ENCODE measurements at regions of chr13 and their contacts with region 1.

Region 1: GRCh38 chr13:70297189-70297616 is 189.0 kb upstream of the KLHL1 start:
- DNase-seq: no peak
- ATAC-seq: no peak
- H3K4me3 ChIP-seq: no peak overlapping the region
- H3K27ac ChIP-seq: no peak overlapping the region
- H3K4me1 ChIP-seq: no peaks in the 10 kb centered on the region
- H3K27me3 ChIP-seq: no peaks in the 10 kb centered on the region
- CTCF ChIP-seq: no peak
- POLR2A ChIP-seq: no peak
- RAD21 ChIP-seq: no peak

Region 2: GRCh38 chr13:70310396-70311119 is 13.4 kb after region 1 on chr13:
- CTCF ChIA-PET with region 1: no interaction called
- POLR2A ChIA-PET with region 1: no interaction called
- dilution Hi-C with region 1: no loop called
- in situ Hi-C with region 1: no loop called
- intact Hi-C with region 1: loop called (anchors 1 kb)
- DNase-seq: no peak
- ATAC-seq: no peak
- H3K4me3 ChIP-seq: no peak overlapping the region
- H3K27ac ChIP-seq: no peak overlapping the region
- H3K4me1 ChIP-seq: no peaks in the 10 kb centered on the region
- H3K27me3 ChIP-seq: no peaks in the 10 kb centered on the region
- CTCF ChIP-seq: no peak
- POLR2A ChIP-seq: no peak
- RAD21 ChIP-seq: no peak

Measured in IMR-90 (cell line).